ENCODE measurements at regions of chr6 and their contacts with region 1.

Region 1: GRCh38 chr6:87929843-87930288 is 117.8 kb upstream of the SPACA1 start:
- DNase-seq: peak; percentile 78 to 79
- H3K4me3 ChIP-seq: no peak overlapping the region
- H3K4me3 Mint-ChIP-seq: no peak overlapping the region
- H3K27ac Mint-ChIP-seq: no peak overlapping the region
- H3K4me1 ChIP-seq: no peaks in the 10 kb centered on the region
- H3K4me1 Mint-ChIP-seq: no peaks in the 10 kb centered on the region
- H3K27me3 ChIP-seq: no peaks in the 10 kb centered on the region
- H3K27me3 Mint-ChIP-seq: no peaks in the 10 kb centered on the region
- CTCF ChIP-seq: peak; percentile 82 to 92

Region 2: DNA sequence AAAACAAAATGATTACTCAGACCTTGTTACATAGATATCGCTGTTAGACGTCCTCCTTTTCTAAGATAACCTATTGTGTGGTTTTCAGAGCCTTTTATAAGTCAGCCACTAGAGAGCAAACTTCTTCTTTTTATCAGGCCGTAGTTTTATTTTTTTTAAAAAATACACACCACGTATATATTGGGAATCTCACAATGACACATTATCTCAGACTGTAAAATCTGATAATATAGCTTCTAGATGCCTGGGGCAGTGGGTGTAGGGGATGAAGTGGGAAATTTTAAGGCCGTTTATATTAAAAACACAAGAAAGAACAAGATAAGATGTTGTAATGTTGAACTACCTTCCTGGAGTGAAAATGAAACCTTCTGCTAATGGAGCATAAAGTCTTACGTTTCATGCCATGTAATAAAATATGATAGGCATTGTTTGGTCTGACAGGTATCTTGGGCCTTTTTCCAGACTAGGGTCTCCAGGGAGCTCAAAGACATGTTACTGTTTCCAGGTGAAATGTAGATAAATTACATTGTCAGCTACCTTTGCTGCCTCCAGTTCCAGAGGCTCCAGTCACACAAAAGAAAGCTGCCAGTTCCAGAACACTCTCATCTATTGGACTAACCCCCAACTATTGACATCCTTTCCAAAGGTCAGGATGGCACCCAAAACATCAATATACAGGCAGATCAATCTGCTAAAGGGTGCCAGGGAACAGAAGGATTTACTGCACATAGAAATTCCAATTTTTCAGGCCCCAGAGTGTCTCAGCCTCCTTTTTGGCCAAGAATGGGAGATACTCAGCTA is 97.6 kb before region 1 on chr6:
- CTCF ChIA-PET with region 1: no interaction called
- POLR2A ChIA-PET with region 1: no interaction called
- intact Hi-C with region 1: loop called (anchors 2 kb)
- DNase-seq: no peak
- H3K4me3 ChIP-seq: no peak overlapping the region
- H3K4me3 Mint-ChIP-seq: no peak overlapping the region
- H3K27ac Mint-ChIP-seq: no peak overlapping the region
- H3K4me1 ChIP-seq: no peaks in the 10 kb centered on the region
- H3K4me1 Mint-ChIP-seq: peaks cover 8% of the 10 kb centered on the region
- H3K27me3 ChIP-seq: no peaks in the 10 kb centered on the region
- H3K27me3 Mint-ChIP-seq: no peaks in the 10 kb centered on the region
- CTCF ChIP-seq: peak; percentile 18 to 28

Region 3: GRCh38 chr6:87914637-87915395 is 15.1 kb before region 1 on chr6:
- CTCF ChIA-PET with region 1: no interaction called
- POLR2A ChIA-PET with region 1: no interaction called
- intact Hi-C with region 1: no loop called
- DNase-seq: no peak
- H3K4me3 ChIP-seq: no peak overlapping the region
- H3K4me3 Mint-ChIP-seq: no peak overlapping the region
- H3K27ac Mint-ChIP-seq: no peak overlapping the region
- H3K4me1 ChIP-seq: no peaks in the 10 kb centered on the region
- H3K4me1 Mint-ChIP-seq: no peaks in the 10 kb centered on the region
- H3K27me3 ChIP-seq: no peaks in the 10 kb centered on the region
- H3K27me3 Mint-ChIP-seq: peaks cover 5% of the 10 kb centered on the region
- CTCF ChIP-seq: no peak

Region 4: GRCh38 chr6:88165844-88166492 is 236.1 kb after region 1 on chr6 and contains the start of gene CNR1:
- CTCF ChIA-PET with region 1: no interaction called
- POLR2A ChIA-PET with region 1: no interaction called
- intact Hi-C with region 1: loop called (anchors 5 kb)
- DNase-seq: peak in 1 of 2 experiments; percentile 49
- H3K4me3 ChIP-seq: peak within 1 kb of the TSS; percentile 43
- H3K4me3 Mint-ChIP-seq: peak within 1 kb of the TSS; percentile 73
- H3K27ac Mint-ChIP-seq: no peak within 1 kb of the TSS
- H3K4me1 ChIP-seq: 0 out of 2 replicates have a peak, but pooled peaks cover 5% of the 10 kb centered on the region
- H3K4me1 Mint-ChIP-seq: peaks cover 6% of the 10 kb centered on the region
- H3K27me3 ChIP-seq: peaks cover 2% of the 10 kb centered on the region; the same call in 1 of the 2 replicates
- H3K27me3 Mint-ChIP-seq: peaks cover 34% of the 10 kb centered on the region
- CTCF ChIP-seq: no peak
- total RNA-seq, gene CNR1: not detected in 2 replicates

Region 5: DNA sequence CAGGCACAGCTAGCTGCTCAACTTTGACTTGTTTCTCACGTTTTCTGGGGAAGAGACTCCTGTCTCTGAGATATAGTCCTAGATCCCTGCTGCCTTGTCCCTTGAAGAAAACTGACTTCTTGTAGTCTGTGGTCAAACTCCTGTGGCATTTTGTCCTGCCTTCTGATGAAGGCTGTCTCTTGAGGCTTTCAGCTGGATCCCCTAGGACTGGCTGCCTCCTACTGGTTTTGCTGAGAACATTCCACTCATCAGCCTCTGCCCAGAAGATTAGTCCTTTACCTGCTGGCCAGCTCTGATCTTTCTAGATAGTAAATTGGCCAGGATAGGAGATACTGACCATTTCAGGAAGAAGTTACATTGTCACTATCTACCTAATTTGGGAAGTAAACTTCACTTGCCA is 308.2 kb after region 1 on chr6:
- CTCF ChIA-PET with region 1: no interaction called
- POLR2A ChIA-PET with region 1: no interaction called
- intact Hi-C with region 1: loop called (anchors 1 kb)
- DNase-seq: peak in 1 of 2 experiments; percentile 12
- H3K4me3 ChIP-seq: no peak overlapping the region
- H3K4me3 Mint-ChIP-seq: no peak overlapping the region
- H3K27ac Mint-ChIP-seq: no peak overlapping the region
- H3K4me1 ChIP-seq: no peaks in the 10 kb centered on the region
- H3K4me1 Mint-ChIP-seq: no peaks in the 10 kb centered on the region
- H3K27me3 ChIP-seq: no peaks in the 10 kb centered on the region
- H3K27me3 Mint-ChIP-seq: peaks cover 3% of the 10 kb centered on the region
- CTCF ChIP-seq: peak in 1 of 2 experiments; percentile 45

Region 6: GRCh38 chr6:88492824-88493223 is 563.0 kb after region 1 on chr6:
- CTCF ChIA-PET with region 1: no interaction called
- POLR2A ChIA-PET with region 1: no interaction called
- intact Hi-C with region 1: loop called (anchors 1 kb)
- DNase-seq: no peak
- H3K4me3 ChIP-seq: no peak overlapping the region
- H3K4me3 Mint-ChIP-seq: no peak overlapping the region
- H3K27ac Mint-ChIP-seq: no peak overlapping the region
- H3K4me1 ChIP-seq: no peaks in the 10 kb centered on the region
- H3K4me1 Mint-ChIP-seq: no peaks in the 10 kb centered on the region
- H3K27me3 ChIP-seq: no peaks in the 10 kb centered on the region; the same call in 1 of the 2 replicates
- H3K27me3 Mint-ChIP-seq: peaks cover 11% of the 10 kb centered on the region
- CTCF ChIP-seq: peak; percentile 26 to 44

Measured in Caco-2 (cell line).